ENCODE measurements at regions of chr17 and their contacts with region 1.

Region 1: GRCh38 chr17:69388822-69389442 is 25.6 kb upstream of the MAP2K6 start:
- DNase-seq: no peak
- H3K4me3 Mint-ChIP-seq: no peak overlapping the region
- H3K27ac Mint-ChIP-seq: no peak overlapping the region
- H3K4me1 Mint-ChIP-seq: no peaks in the 10 kb centered on the region
- H3K27me3 Mint-ChIP-seq: peaks cover 12% of the 10 kb centered on the region
- CTCF ChIP-seq: no peak

Region 2: GRCh38 chr17:69335058-69335457 is 53.9 kb before region 1 on chr17:
- CTCF ChIA-PET with region 1: interaction called, 3 read pairs
- POLR2A ChIA-PET with region 1: no interaction called
- intact Hi-C with region 1: loop called (anchors 1 kb)
- DNase-seq: peak; percentile 44
- H3K4me3 Mint-ChIP-seq: no peak overlapping the region
- H3K27ac Mint-ChIP-seq: no peak overlapping the region
- H3K4me1 Mint-ChIP-seq: no peaks in the 10 kb centered on the region
- H3K27me3 Mint-ChIP-seq: no peaks in the 10 kb centered on the region
- CTCF ChIP-seq: peak; percentile 48

Region 3: GRCh38 chr17:69404382-69404781 is 15.4 kb after region 1 on chr17:
- CTCF ChIA-PET with region 1: interaction called, 13 read pairs
- POLR2A ChIA-PET with region 1: interaction called, 3 read pairs
- intact Hi-C with region 1: no loop called
- DNase-seq: peak; percentile 75
- H3K4me3 Mint-ChIP-seq: no peak overlapping the region
- H3K27ac Mint-ChIP-seq: no peak overlapping the region
- H3K4me1 Mint-ChIP-seq: peaks cover 12% of the 10 kb centered on the region
- H3K27me3 Mint-ChIP-seq: no peaks in the 10 kb centered on the region
- CTCF ChIP-seq: no peak